WTC11 (cell line): ENCODE measurements at regions of chr2 and their contacts with region 1.

Region 1: GRCh38 chr2:223970343-223971128 is 13.3 kb downstream of the MRPL44 start:
- DNase-seq: no peak
- ATAC-seq: peak; percentile 66
- H3K4me3 Mint-ChIP-seq: no peak overlapping the region
- H3K27ac Mint-ChIP-seq: no peak overlapping the region
- H3K4me1 Mint-ChIP-seq: peaks cover 22% of the 10 kb centered on the region
- H3K27me3 Mint-ChIP-seq: no peaks in the 10 kb centered on the region
- CTCF ChIP-seq: peak; percentile 80

Region 2: DNA sequence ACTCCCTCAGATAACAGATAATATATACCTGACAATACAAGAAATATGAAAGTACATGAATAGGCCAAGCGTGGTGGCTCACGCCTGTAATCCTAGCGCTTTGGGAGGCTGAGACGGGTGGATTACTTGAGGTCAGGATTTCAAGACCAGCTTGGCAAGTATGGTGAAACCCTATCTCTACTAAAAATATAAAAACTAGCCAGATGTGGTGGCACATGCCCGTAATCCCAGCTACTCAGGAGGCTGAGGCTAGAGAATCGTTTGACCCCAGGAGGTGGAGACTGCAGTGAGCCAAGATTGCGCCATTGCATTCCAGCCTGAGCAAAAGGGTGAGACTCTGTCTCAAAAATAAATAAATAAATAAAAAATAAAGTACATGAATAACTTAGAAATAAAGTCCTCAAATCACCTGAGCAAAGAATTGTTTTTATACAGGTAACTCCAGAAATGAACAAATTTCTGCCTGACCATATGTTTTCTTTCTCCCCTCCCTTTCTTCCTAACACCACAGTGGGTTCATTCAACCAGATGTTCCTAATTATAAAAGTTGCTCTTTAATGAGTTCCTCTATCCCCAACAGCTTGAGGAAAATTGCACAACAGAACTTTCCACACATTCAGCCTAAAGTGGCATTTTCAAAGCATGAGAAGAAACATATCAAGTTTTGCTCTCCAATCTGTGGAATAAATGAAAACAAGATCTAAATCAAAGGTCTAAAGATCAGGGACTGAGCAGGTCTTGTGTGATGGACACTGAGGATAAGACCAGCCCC is 99.5 kb before region 1 on chr2:
- CTCF ChIA-PET with region 1: no interaction called
- POLR2A ChIA-PET with region 1: no interaction called
- DNase-seq: no peak
- ATAC-seq: no peak
- H3K4me3 Mint-ChIP-seq: no peak overlapping the region
- H3K27ac Mint-ChIP-seq: peak overlapping the region; percentile 63
- H3K4me1 Mint-ChIP-seq: peaks cover 7% of the 10 kb centered on the region
- H3K27me3 Mint-ChIP-seq: no peaks in the 10 kb centered on the region
- CTCF ChIP-seq: no peak

Region 3: DNA sequence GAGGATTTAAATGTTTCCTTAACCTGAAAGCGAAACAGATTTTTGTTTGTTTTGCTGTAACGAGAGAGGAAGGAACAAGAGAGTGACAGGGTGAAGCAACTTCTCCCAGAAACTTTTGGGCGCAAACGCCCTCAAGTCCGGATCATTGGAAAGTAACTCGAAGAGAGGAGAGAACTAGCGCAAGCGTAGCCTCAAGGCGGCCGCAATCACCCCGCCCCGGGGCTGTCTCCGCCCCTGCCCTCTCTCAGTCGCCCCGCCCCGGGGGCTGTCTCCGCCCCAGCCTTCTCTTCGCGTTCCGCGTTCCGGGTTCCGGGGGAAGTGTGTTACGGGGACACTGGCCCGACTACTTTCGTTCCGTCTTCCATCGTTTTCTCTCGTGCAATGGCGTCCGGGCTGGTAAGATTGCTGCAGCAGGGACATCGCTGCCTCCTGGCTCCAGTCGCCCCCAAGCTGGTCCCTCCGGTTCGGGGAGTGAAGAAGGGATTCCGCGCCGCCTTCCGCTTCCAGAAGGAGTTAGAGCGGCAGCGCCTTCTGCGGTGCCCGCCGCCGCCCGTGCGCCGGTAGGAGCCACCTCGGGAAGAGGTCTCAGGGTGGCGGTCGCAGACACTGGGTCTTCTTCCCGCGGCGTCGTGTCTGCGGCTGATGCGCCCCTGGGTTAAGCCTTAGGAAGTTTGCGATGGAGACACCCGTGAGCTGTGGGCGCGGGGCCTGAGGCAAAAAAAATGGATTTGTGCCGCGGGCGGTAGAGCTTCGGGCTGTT is 13.3 kb before region 1 on chr2 and contains the start of gene MRPL44:
- CTCF ChIA-PET with region 1: interaction called, 18 read pairs
- POLR2A ChIA-PET with region 1: no interaction called
- DNase-seq: peak; percentile 97
- ATAC-seq: peak; percentile 99
- H3K4me3 Mint-ChIP-seq: peak within 1 kb of the TSS; percentile 95
- H3K27ac Mint-ChIP-seq: peak within 1 kb of the TSS; percentile 88
- H3K4me1 Mint-ChIP-seq: peaks cover 44% of the 10 kb centered on the region
- H3K27me3 Mint-ChIP-seq: no peaks in the 10 kb centered on the region; the same call in 1 of the 2 replicates
- CTCF ChIP-seq: no peak
- total RNA-seq, gene MRPL44: 47.6 to 55.3 TPM (median 50.5 TPM) in 3 replicates

Region 4: DNA sequence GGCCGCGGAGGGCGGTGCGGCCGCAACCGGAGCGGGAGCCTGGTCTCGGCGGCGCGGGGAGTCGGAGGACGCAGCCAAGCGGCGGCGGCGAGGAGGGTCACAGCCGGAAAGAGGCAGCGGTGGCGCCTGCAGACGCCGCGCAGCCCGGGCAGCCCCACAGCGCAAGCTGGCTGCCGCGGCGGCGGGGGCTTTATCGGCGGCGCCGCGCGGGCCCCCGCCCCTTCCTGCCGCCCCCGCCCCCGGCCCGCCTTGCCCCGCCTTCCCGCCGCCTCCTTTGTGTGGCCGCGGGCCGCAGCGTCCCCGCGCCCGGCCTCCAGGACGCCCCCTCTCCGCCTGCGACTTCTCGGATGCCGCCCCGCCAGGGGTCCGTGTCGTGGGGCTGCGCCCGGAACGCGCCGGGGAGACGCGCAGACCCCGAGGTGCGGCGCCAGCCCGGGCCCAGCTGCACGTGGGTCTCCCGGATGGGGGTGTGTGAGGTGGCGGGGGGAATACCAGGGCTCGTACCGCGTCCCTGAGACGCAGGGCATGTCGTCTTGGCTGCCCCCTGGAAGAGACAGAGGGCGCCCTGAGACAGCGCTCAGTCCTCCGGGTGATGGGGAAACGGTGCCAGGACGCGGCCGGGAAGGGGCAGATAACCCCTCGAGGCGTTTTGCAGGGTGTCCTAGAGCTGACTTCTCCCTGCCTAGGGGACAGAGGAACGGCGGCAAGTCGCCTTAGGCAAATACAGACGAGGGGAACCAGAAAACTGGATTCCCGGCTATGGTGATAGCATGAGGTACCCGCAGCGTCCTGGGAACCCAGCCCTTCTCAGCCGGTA is 68.8 kb after region 1 on chr2 and contains the start of gene SERPINE2:
- CTCF ChIA-PET with region 1: interaction called, 14 read pairs
- POLR2A ChIA-PET with region 1: no interaction called
- DNase-seq: peak; percentile 68
- ATAC-seq: peak; percentile 79
- H3K4me3 Mint-ChIP-seq: peak within 1 kb of the TSS; percentile 83
- H3K27ac Mint-ChIP-seq: no peak within 1 kb of the TSS
- H3K4me1 Mint-ChIP-seq: peaks cover 30% of the 10 kb centered on the region
- H3K27me3 Mint-ChIP-seq: peaks cover 58% of the 10 kb centered on the region
- CTCF ChIP-seq: no peak
- total RNA-seq, gene SERPINE2: 53.1 to 60.4 TPM (median 54.2 TPM) in 3 replicates

Region 5: GRCh38 chr2:224284134-224284946 is 313.8 kb after region 1 on chr2:
- CTCF ChIA-PET with region 1: interaction called, 130 read pairs
- POLR2A ChIA-PET with region 1: interaction called, 8 read pairs
- DNase-seq: peak; percentile 23
- ATAC-seq: peak; percentile 71
- H3K4me3 Mint-ChIP-seq: no peak overlapping the region
- H3K27ac Mint-ChIP-seq: no peak overlapping the region
- H3K4me1 Mint-ChIP-seq: no peaks in the 10 kb centered on the region; the same call in 1 of the 2 replicates
- H3K27me3 Mint-ChIP-seq: no peaks in the 10 kb centered on the region
- CTCF ChIP-seq: peak; percentile 51

Region 6: DNA sequence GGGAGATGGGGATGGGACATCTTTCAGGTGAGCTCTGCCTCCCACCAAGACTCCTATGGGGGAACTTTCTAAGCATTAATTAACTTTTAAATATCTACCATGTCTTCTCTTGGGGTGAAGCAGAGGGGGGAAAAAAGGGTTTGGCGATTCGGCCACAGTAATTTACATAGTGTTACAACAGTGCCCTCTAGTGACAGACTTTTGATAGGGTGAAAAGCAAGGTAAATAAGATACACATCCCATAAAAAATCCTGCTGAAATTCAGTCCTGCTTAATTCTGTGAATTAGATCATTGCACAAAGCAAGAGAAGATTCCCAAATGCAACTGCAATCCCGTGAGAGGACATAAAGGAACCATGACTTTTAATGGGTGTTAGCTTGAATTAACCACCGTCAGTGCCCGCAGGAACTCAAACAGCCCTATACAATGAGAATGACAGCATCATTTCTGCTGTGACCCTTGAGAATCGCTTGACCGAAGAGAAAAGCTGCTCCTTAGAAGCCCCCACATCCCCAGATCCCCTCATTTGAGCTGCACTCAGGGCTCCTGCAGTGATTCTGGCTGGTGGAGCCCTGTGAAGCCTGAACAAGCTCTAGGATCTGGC is 398.6 kb after region 1 on chr2:
- CTCF ChIA-PET with region 1: interaction called, 11 read pairs
- POLR2A ChIA-PET with region 1: no interaction called
- DNase-seq: no peak
- ATAC-seq: peak; percentile 79
- H3K4me3 Mint-ChIP-seq: no peak overlapping the region
- H3K27ac Mint-ChIP-seq: no peak overlapping the region
- H3K4me1 Mint-ChIP-seq: peaks cover 3% of the 10 kb centered on the region; the same call in 1 of the 2 replicates
- H3K27me3 Mint-ChIP-seq: no peaks in the 10 kb centered on the region; the same call in 1 of the 2 replicates
- CTCF ChIP-seq: peak; percentile 64